ENCODE measurements at regions of chr1 and their contacts with region 1.

Region 1: GRCh38 chr1:67500413-67500959 is 70.3 kb upstream of the SERBP1 start:
- DNase-seq: peak; percentile 94
- H3K4me3 ChIP-seq: peak overlapping the region in 1 of 2 donors; percentile 17
- H3K27ac ChIP-seq: no peak overlapping the region
- H3K4me1 ChIP-seq: no peaks in the 10 kb centered on the region
- H3K27me3 ChIP-seq: no peaks in the 10 kb centered on the region
- CTCF ChIP-seq: peak; percentile 72 to 94 (median 90)
- POLR2A ChIP-seq: no peak

Region 2: DNA sequence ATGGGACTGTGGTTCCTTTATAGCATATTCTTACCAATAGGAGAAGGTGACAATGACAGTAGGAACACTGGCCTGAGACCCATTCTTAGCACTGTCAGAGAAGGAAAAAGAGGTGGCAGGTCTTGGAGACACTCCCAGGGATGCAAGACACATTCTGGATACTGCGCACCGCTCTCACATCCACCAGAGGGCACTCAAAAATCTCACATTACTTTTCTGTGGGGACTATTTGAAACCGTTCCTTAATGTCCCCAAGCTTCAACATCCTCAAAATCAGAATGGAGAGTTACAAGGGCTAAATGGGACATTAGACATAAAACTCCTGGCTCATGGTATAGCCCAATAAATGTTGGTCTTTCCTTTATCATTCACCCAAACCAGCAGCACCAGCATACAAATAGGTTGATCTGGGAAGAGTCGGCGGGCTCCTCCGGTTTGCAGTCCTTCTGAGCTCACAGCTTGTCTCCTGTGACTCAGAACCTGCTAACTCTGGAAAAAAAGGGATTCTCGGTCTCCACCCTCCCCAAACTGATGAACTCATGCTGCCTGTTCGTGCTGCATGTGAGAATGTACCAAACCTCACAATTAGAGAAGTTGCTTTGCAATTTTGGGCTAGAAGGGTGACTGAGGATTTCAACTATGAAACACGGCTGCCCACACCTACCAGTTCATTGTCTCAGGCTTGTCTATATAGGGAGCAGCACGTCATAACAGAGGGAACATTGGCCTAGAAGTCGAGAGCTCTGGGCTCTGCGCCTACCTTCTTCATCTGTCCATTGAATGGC is 152.6 kb before region 1 on chr1:
- intact Hi-C with region 1: loop called (anchors 5 kb)
- DNase-seq: peak; percentile 59
- H3K4me3 ChIP-seq: no peak overlapping the region
- H3K27ac ChIP-seq: no peak overlapping the region
- H3K4me1 ChIP-seq: no peaks in the 10 kb centered on the region
- H3K27me3 ChIP-seq: no peaks in the 10 kb centered on the region
- CTCF ChIP-seq: peak; percentile 25 to 63 (median 58)
- POLR2A ChIP-seq: no peak

Region 3: GRCh38 chr1:67552336-67552759 is 51.9 kb after region 1 on chr1:
- intact Hi-C with region 1: no loop called
- DNase-seq: no peak
- H3K4me3 ChIP-seq: no peak overlapping the region
- H3K27ac ChIP-seq: no peak overlapping the region
- H3K4me1 ChIP-seq: peaks cover 2% of the 10 kb centered on the region
- H3K27me3 ChIP-seq: no peaks in the 10 kb centered on the region
- CTCF ChIP-seq: no peak
- POLR2A ChIP-seq: no peak

Measured in testis (tissue), 5 donors.